ENCODE measurements at regions of chr1 and their contacts with region 1.

Region 1: GRCh38 chr1:21514245-21514644 is 5.0 kb downstream of the ALPL start:
- DNase-seq: no peak

Region 2: GRCh38 chr1:20440785-20441200 is 1073.5 kb before region 1 on chr1:
- intact Hi-C with region 1: no loop called
- DNase-seq: peak; percentile 50

Region 3: DNA sequence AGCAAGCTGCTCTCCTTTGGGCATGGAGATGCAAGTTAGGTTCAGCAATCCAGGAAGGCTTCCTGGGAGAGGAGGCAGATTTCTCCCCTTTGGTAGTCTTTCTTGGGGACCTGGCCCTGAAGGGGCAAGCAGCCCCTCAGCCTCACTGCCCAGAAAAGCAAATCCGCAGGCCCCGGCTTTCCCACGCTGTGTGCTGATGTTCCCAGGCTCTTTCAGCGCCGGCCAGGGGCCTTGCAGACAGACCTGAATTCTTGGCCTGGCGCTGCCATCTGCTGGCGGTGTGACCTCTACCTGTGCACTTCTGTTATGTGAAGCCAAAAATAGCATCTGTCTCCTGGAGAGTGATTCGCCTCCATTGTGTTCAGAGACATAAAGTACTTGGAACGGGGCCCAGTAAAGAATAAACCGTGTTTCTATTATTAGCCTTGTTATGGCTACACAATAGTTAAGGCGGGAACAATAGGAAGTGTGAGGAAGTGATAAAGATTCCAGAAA is 59.8 kb after region 1 on chr1:
- intact Hi-C with region 1: loop called in 1 of 2 experiments (anchors 2 kb)
- DNase-seq: peak; percentile 93